CD8-positive, alpha-beta memory T cell (primary cell): ENCODE measurements at regions of chr6 and their contacts with region 1.

Region 1: GRCh38 chr6:75208298-75209183 is 2.7 kb upstream of the COL12A1 start:
- DNase-seq: peak; percentile 71 to 83 (median 72)
- H3K4me3 ChIP-seq: peak overlapping the region; percentile 46
- H3K4me3 Mint-ChIP-seq: peak overlapping the region; percentile 49 to 87 (median 81)
- H3K27ac ChIP-seq: no peak overlapping the region
- H3K27ac Mint-ChIP-seq: peak overlapping the region in 2 of 8 donors; percentile 12 to 30
- H3K4me1 ChIP-seq: peaks cover 45% of the 10 kb centered on the region
- H3K4me1 Mint-ChIP-seq: peaks cover 51 to 57% (median 57%) of the 10 kb centered on the region in 3 donors
- H3K27me3 ChIP-seq: peaks cover 46% of the 10 kb centered on the region
- H3K27me3 Mint-ChIP-seq: peaks cover 60 to 80% of the 10 kb centered on the region in 2 donors

Region 2: GRCh38 chr6:73523434-73524123 is 1685.0 kb before region 1 on chr6:
- CTCF ChIA-PET with region 1: no interaction called
- POLR2A ChIA-PET with region 1: no interaction called
- DNase-seq: peak; percentile 72 to 85 (median 78)
- H3K4me3 ChIP-seq: peak overlapping the region; percentile 67
- H3K4me3 Mint-ChIP-seq: peak overlapping the region; percentile 89 to 99 (median 95)
- H3K27ac ChIP-seq: peak overlapping the region; percentile 100
- H3K27ac Mint-ChIP-seq: peak overlapping the region; percentile 92 to 99 (median 99)
- H3K4me1 ChIP-seq: peaks cover 34% of the 10 kb centered on the region
- H3K4me1 Mint-ChIP-seq: peaks cover 39 to 47% (median 40%) of the 10 kb centered on the region in 3 donors
- H3K27me3 ChIP-seq: no peaks in the 10 kb centered on the region
- H3K27me3 Mint-ChIP-seq: peaks cover 0 to 11% of the 10 kb centered on the region in 2 donors

Region 3: GRCh38 chr6:73675466-73676098 is 1533.0 kb before region 1 on chr6:
- CTCF ChIA-PET with region 1: interaction called, 24 read pairs
- POLR2A ChIA-PET with region 1: no interaction called
- DNase-seq: peak; percentile 34 to 71 (median 51)
- H3K4me3 ChIP-seq: no peak overlapping the region
- H3K4me3 Mint-ChIP-seq: no peak overlapping the region
- H3K27ac ChIP-seq: no peak overlapping the region
- H3K27ac Mint-ChIP-seq: no peak overlapping the region
- H3K4me1 ChIP-seq: no peaks in the 10 kb centered on the region
- H3K4me1 Mint-ChIP-seq: peaks cover 0 to 2% (median 0%) of the 10 kb centered on the region in 3 donors
- H3K27me3 ChIP-seq: no peaks in the 10 kb centered on the region
- H3K27me3 Mint-ChIP-seq: peaks cover 15 to 28% of the 10 kb centered on the region in 2 donors

Region 4: GRCh38 chr6:73732845-73733675 is 1475.5 kb before region 1 on chr6:
- CTCF ChIA-PET with region 1: interaction called, 94 read pairs
- POLR2A ChIA-PET with region 1: no interaction called
- DNase-seq: peak; percentile 42 to 73 (median 44)
- H3K4me3 ChIP-seq: no peak overlapping the region
- H3K4me3 Mint-ChIP-seq: no peak overlapping the region
- H3K27ac ChIP-seq: no peak overlapping the region
- H3K27ac Mint-ChIP-seq: peak overlapping the region in 1 of 8 donors; percentile 73
- H3K4me1 ChIP-seq: no peaks in the 10 kb centered on the region
- H3K4me1 Mint-ChIP-seq: no peaks in the 10 kb centered on the region
- H3K27me3 ChIP-seq: no peaks in the 10 kb centered on the region
- H3K27me3 Mint-ChIP-seq: peaks cover 4 to 13% of the 10 kb centered on the region in 2 donors

Region 5: GRCh38 chr6:73739096-73739495 is 1469.4 kb before region 1 on chr6:
- CTCF ChIA-PET with region 1: interaction called, 94 read pairs
- POLR2A ChIA-PET with region 1: no interaction called
- DNase-seq: peak in 2 of 5 donors; percentile 34 to 51
- H3K4me3 ChIP-seq: no peak overlapping the region
- H3K4me3 Mint-ChIP-seq: no peak overlapping the region
- H3K27ac ChIP-seq: no peak overlapping the region
- H3K27ac Mint-ChIP-seq: no peak overlapping the region
- H3K4me1 ChIP-seq: no peaks in the 10 kb centered on the region
- H3K4me1 Mint-ChIP-seq: no peaks in the 10 kb centered on the region
- H3K27me3 ChIP-seq: no peaks in the 10 kb centered on the region
- H3K27me3 Mint-ChIP-seq: peaks cover 3 to 15% of the 10 kb centered on the region in 2 donors

Region 6: DNA sequence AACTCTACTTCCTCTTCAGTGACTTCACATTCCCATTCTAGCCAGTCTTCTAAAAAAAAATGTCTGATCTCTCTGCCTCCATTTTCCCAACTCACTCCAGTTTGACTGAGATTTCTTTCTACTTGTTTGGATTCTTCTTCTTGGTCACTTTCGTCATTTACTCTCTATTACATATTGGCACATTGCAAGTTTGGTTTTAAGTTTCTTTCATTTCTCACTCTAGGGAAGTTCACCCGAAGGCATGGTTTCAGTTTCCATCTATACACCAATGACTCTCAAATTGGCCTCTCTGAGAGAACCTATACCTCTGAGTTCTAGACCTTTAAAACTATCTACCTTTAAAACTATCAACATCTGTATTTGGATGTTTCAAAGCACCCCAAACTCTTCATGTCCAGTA is 1461.3 kb before region 1 on chr6:
- CTCF ChIA-PET with region 1: interaction called, 21 read pairs
- POLR2A ChIA-PET with region 1: no interaction called
- DNase-seq: no peak
- H3K4me3 ChIP-seq: peak overlapping the region; percentile 38
- H3K4me3 Mint-ChIP-seq: no peak overlapping the region
- H3K27ac ChIP-seq: no peak overlapping the region
- H3K27ac Mint-ChIP-seq: no peak overlapping the region
- H3K4me1 ChIP-seq: no peaks in the 10 kb centered on the region
- H3K4me1 Mint-ChIP-seq: no peaks in the 10 kb centered on the region
- H3K27me3 ChIP-seq: no peaks in the 10 kb centered on the region
- H3K27me3 Mint-ChIP-seq: peaks cover 0 to 5% of the 10 kb centered on the region in 2 donors

Region 7: DNA sequence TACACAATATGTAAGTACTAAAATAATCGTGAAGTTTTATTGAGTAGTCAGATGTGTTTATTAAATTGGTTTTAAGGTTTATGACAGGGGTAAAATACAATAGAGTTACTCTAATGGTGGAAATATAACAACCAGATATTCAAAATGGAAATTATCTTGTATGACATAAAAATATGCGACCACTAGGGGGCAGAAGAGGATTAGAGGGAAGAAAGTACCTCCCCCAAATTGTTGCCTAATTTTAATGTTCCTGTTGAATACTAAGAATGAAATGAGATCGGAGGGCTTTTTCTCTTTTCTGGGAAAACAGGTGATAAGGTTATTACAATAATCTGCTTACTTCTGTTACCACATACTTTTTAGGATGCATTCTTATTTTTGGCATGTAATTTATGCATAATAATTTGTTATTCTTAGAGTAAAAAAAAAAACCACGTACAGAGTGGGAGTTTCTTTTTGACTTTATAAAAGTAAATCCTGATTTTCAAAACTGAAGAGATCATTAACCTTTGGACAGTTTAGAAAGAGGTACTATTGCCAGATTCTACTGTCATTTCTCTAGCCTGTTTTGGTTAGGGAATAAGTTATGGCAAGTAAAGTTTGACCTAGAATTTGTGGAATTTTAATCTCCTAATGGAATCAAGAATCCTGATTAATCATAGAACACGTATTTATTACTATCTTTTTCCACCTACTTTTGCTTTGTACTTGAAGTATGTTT is 1353.4 kb before region 1 on chr6:
- CTCF ChIA-PET with region 1: interaction called, 20 read pairs
- POLR2A ChIA-PET with region 1: no interaction called
- DNase-seq: peak in 2 of 5 donors; percentile 18 to 28
- H3K4me3 ChIP-seq: no peak overlapping the region
- H3K4me3 Mint-ChIP-seq: no peak overlapping the region
- H3K27ac ChIP-seq: no peak overlapping the region
- H3K27ac Mint-ChIP-seq: no peak overlapping the region
- H3K4me1 ChIP-seq: no peaks in the 10 kb centered on the region
- H3K4me1 Mint-ChIP-seq: peaks cover 0 to 6% (median 3%) of the 10 kb centered on the region in 3 donors
- H3K27me3 ChIP-seq: no peaks in the 10 kb centered on the region
- H3K27me3 Mint-ChIP-seq: peaks cover 3 to 4% of the 10 kb centered on the region in 2 donors

Region 8: GRCh38 chr6:75103461-75103860 is 105.1 kb before region 1 on chr6:
- CTCF ChIA-PET with region 1: no interaction called
- POLR2A ChIA-PET with region 1: no interaction called
- DNase-seq: no peak
- H3K4me3 ChIP-seq: no peak overlapping the region
- H3K4me3 Mint-ChIP-seq: no peak overlapping the region
- H3K27ac ChIP-seq: no peak overlapping the region
- H3K27ac Mint-ChIP-seq: no peak overlapping the region
- H3K4me1 ChIP-seq: no peaks in the 10 kb centered on the region
- H3K4me1 Mint-ChIP-seq: no peaks in the 10 kb centered on the region
- H3K27me3 ChIP-seq: no peaks in the 10 kb centered on the region
- H3K27me3 Mint-ChIP-seq: peaks cover 0 to 3% of the 10 kb centered on the region in 2 donors

Region 9: DNA sequence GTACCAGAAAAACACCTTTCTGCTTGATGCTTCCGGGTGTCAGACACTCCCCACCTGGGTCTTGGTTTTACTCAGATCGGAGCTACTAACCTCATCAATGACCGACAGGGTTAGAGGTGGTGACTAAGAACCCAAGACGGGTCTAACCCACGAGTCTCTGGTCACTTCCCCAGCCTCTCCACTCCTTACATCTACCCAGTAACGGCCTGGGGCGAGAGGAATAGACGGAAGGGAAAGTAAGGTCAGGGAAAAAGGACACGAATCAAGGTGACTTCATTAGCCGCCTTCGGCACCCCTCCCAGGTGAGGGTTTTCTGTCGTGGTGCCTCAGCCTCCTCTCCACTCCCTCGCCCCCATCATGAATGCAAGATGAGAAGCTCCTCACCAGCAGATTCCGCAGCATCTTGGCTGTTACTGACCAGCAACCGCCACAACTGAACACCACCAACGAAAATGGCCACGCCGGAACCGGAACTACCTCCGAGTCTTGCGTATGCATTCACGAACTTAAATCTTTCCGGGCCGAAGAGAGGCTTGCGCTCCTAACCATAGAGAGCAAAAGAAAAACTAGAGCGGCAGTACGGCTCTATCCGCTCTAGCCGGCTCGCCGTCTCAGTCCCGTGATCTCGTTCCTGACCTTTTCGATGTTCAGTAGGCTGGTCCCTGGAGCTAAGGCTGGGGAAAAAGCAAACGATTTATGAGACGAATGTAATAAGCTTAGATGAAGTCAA is 35.0 kb after region 1 on chr6 and contains the start of gene COX7A2:
- CTCF ChIA-PET with region 1: interaction called, 12 read pairs
- POLR2A ChIA-PET with region 1: interaction called, 3 read pairs
- DNase-seq: peak; percentile 73 to 90 (median 84)
- H3K4me3 ChIP-seq: peak within 1 kb of the TSS; percentile 83
- H3K4me3 Mint-ChIP-seq: peak within 1 kb of the TSS; percentile 97 to 99 (median 98)
- H3K27ac ChIP-seq: peak within 1 kb of the TSS; percentile 84
- H3K27ac Mint-ChIP-seq: peak within 1 kb of the TSS; percentile 95 to 100 (median 99)
- H3K4me1 ChIP-seq: peaks cover 5% of the 10 kb centered on the region
- H3K4me1 Mint-ChIP-seq: peaks cover 27 to 47% (median 34%) of the 10 kb centered on the region in 3 donors
- H3K27me3 ChIP-seq: no peaks in the 10 kb centered on the region
- H3K27me3 Mint-ChIP-seq: peaks cover 4 to 20% of the 10 kb centered on the region in 2 donors
- total RNA-seq, gene COX7A2: 504 to 527 TPM

Region 10: GRCh38 chr6:75368151-75368779 is 159.7 kb after region 1 on chr6:
- CTCF ChIA-PET with region 1: no interaction called
- POLR2A ChIA-PET with region 1: no interaction called
- DNase-seq: no peak
- H3K4me3 ChIP-seq: no peak overlapping the region
- H3K4me3 Mint-ChIP-seq: no peak overlapping the region
- H3K27ac ChIP-seq: no peak overlapping the region
- H3K27ac Mint-ChIP-seq: no peak overlapping the region
- H3K4me1 ChIP-seq: no peaks in the 10 kb centered on the region
- H3K4me1 Mint-ChIP-seq: no peaks in the 10 kb centered on the region
- H3K27me3 ChIP-seq: no peaks in the 10 kb centered on the region
- H3K27me3 Mint-ChIP-seq: peaks cover 3 to 17% of the 10 kb centered on the region in 2 donors

Region 11: GRCh38 chr6:76671751-76672150 is 1463.2 kb after region 1 on chr6:
- CTCF ChIA-PET with region 1: no interaction called
- POLR2A ChIA-PET with region 1: no interaction called
- DNase-seq: no peak
- H3K4me3 ChIP-seq: no peak overlapping the region
- H3K4me3 Mint-ChIP-seq: no peak overlapping the region
- H3K27ac ChIP-seq: no peak overlapping the region
- H3K27ac Mint-ChIP-seq: no peak overlapping the region
- H3K4me1 ChIP-seq: no peaks in the 10 kb centered on the region
- H3K4me1 Mint-ChIP-seq: no peaks in the 10 kb centered on the region
- H3K27me3 ChIP-seq: no peaks in the 10 kb centered on the region
- H3K27me3 Mint-ChIP-seq: no peaks in the 10 kb centered on the region